ENCODE measurements at regions of chr17 and their contacts with region 1.

Region 1: GRCh38 chr17:78774956-78775571 is 7.0 kb downstream of the CYTH1 start:
- DNase-seq: peak; percentile 35 to 85 (median 67)
- ATAC-seq: peak; percentile 41
- H3K4me3 ChIP-seq: peak overlapping the region; percentile 46 to 62
- H3K4me3 Mint-ChIP-seq: peak overlapping the region; percentile 88
- H3K27ac ChIP-seq: peak overlapping the region; percentile 55 to 82
- H3K27ac Mint-ChIP-seq: peak overlapping the region; percentile 96
- H3K4me1 ChIP-seq: peaks cover 81% of the 10 kb centered on the region
- H3K4me1 Mint-ChIP-seq: peaks cover 67% of the 10 kb centered on the region
- H3K27me3 ChIP-seq: no peaks in the 10 kb centered on the region
- H3K27me3 Mint-ChIP-seq: no peaks in the 10 kb centered on the region
- CTCF ChIP-seq: no peak

Region 2: GRCh38 chr17:78736526-78737079 is 38.5 kb before region 1 on chr17:
- CTCF ChIA-PET with region 1: interaction called, 4 read pairs
- POLR2A ChIA-PET with region 1: interaction called, 4 read pairs
- intact Hi-C with region 1: loop called (anchors 5 kb)
- DNase-seq: peak; percentile 35 to 85 (median 65)
- ATAC-seq: peak; percentile 81
- H3K4me3 ChIP-seq: peak overlapping the region; percentile 63 to 72
- H3K4me3 Mint-ChIP-seq: peak overlapping the region; percentile 88
- H3K27ac ChIP-seq: peak overlapping the region; percentile 58 to 79
- H3K27ac Mint-ChIP-seq: peak overlapping the region; percentile 92
- H3K4me1 ChIP-seq: peaks cover 86% of the 10 kb centered on the region
- H3K4me1 Mint-ChIP-seq: peaks cover 88% of the 10 kb centered on the region
- H3K27me3 ChIP-seq: no peaks in the 10 kb centered on the region
- H3K27me3 Mint-ChIP-seq: no peaks in the 10 kb centered on the region
- CTCF ChIP-seq: no peak

Region 3: DNA sequence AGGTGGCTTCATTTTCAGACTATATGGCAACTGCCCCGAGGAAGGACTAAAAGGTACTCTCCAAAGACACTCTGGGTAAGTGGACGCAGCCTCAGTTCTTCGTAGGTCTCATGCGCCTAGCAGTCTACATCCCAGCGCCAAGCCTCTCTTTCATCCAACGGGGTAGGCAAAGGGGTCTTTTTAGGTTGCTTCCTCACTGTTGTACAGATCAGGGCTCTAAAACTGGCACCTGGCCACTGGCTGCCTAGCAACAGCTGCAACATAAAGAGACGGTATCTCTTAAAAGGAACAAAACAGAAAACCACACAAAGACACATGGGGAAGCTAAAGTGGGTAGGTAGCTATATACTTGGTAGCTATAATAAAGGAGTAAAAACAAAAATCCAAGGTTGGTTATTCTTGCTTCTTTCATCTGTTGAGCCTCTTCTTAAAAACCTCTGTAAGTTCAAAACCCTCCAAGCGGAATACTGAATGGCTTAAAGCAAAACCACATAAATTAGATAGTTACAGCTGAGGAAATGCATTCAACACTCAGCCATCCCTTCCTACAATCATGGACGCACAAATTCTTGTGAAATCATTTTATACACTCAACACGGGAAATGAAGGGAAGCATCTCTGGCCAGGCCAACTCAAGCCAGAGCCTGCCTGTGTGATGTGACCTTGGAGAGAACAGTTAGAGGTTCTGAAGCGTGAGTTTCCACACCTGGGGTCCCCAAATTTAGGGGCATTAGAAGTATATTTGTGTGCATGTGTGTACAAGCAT is 15.7 kb before region 1 on chr17:
- CTCF ChIA-PET with region 1: interaction called, 3 read pairs
- POLR2A ChIA-PET with region 1: interaction called, 12 read pairs
- intact Hi-C with region 1: loop called (anchors 1 kb)
- DNase-seq: peak; percentile 68 to 94 (median 87)
- ATAC-seq: peak; percentile 78
- H3K4me3 ChIP-seq: peak overlapping the region; percentile 19 to 21
- H3K4me3 Mint-ChIP-seq: peak overlapping the region; percentile 66
- H3K27ac ChIP-seq: peak overlapping the region; percentile 85 to 93
- H3K27ac Mint-ChIP-seq: peak overlapping the region; percentile 86
- H3K4me1 ChIP-seq: peaks cover 84% of the 10 kb centered on the region
- H3K4me1 Mint-ChIP-seq: peaks cover 77% of the 10 kb centered on the region
- H3K27me3 ChIP-seq: no peaks in the 10 kb centered on the region
- H3K27me3 Mint-ChIP-seq: no peaks in the 10 kb centered on the region
- CTCF ChIP-seq: no peak

Region 4: GRCh38 chr17:78818932-78819331 is 43.9 kb after region 1 on chr17:
- CTCF ChIA-PET with region 1: no interaction called
- POLR2A ChIA-PET with region 1: interaction called, 3 read pairs
- intact Hi-C with region 1: loop called in 1 of 2 experiments (anchors 2 kb)
- DNase-seq: peak; percentile 35 to 90 (median 64)
- ATAC-seq: peak; percentile 47
- H3K4me3 ChIP-seq: peak overlapping the region in 1 of 2 experiments; percentile 21
- H3K4me3 Mint-ChIP-seq: peak overlapping the region; percentile 58
- H3K27ac ChIP-seq: peak overlapping the region; percentile 61 to 78
- H3K27ac Mint-ChIP-seq: peak overlapping the region; percentile 90
- H3K4me1 ChIP-seq: peaks cover 43% of the 10 kb centered on the region
- H3K4me1 Mint-ChIP-seq: peaks cover 68% of the 10 kb centered on the region
- H3K27me3 ChIP-seq: no peaks in the 10 kb centered on the region
- H3K27me3 Mint-ChIP-seq: no peaks in the 10 kb centered on the region
- CTCF ChIP-seq: no peak

Measured in CD8-positive, alpha-beta T cell (primary cell).